ENCODE measurements at regions of chr1 and their contacts with region 1.

Region 1: DNA sequence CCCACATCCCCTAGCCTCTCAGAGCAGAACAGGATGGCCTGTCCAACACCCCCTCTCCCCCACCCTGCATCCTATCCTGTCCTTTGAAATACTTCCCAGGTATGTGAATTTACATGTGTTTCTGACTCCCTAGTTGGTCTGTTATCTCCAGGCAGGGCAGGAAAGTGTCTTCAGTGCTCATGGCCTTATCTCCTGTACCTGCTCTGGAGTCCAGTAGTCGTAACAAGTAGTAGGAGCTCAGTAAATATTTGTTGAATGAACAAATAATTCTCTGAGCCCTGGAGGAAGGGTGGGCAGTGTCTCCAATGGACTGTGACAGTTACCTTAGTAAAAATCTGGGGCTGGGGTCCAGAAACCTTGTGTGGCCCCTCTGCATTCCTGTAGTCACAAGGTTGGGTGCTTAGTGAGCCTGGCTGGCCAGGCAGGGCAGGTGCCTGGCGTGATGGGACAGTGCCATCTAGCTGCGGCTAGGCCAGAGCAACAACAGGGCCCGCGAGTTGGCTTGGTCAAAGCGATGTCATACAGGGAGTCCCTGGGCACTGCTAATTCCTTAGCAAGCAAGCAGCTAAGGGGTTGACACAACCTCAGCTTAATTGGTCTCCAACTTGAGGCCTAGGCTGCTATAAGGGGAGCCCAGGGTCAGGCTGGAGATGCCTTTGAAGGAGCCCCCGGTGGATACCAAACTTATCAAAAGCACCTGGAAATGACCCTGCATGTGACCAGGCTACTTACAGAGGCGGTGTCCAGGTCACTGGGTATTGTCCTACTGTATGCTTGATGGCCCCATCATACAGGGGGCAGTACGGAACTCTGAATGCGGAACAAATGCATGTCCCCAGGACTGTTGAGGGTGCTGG is 89.0 kb upstream of the PPM1J start:
- DNase-seq: peak; percentile 36 to 86 (median 72)
- ATAC-seq: peak; percentile 98
- H3K4me3 ChIP-seq: no peak overlapping the region
- H3K27ac ChIP-seq: no peak overlapping the region
- H3K4me1 ChIP-seq: no peaks in the 10 kb centered on the region
- H3K27me3 ChIP-seq: peaks cover 0 to 3% of the 10 kb centered on the region in 2 donors
- CTCF ChIP-seq: peak; percentile 53 to 68

Region 2: GRCh38 chr1:112715264-112716053 is 88.7 kb before region 1 on chr1 and contains the start of gene PPM1J:
- intact Hi-C with region 1: loop called (anchors 5 to 10 kb)
- DNase-seq: peak; percentile 75 to 100 (median 94)
- ATAC-seq: peak; percentile 91
- H3K4me3 ChIP-seq: peak within 1 kb of the TSS; percentile 56 to 67
- H3K27ac ChIP-seq: peak within 1 kb of the TSS in 1 of 2 donors; percentile 58
- H3K4me1 ChIP-seq: peaks cover 13 to 37% of the 10 kb centered on the region in 2 donors
- H3K27me3 ChIP-seq: peaks cover 0 to 38% of the 10 kb centered on the region in 2 donors
- CTCF ChIP-seq: no peak
- polyA plus RNA-seq, gene PPM1J: 0.47 to 0.72 (median 0.62) TPM

Region 3: DNA sequence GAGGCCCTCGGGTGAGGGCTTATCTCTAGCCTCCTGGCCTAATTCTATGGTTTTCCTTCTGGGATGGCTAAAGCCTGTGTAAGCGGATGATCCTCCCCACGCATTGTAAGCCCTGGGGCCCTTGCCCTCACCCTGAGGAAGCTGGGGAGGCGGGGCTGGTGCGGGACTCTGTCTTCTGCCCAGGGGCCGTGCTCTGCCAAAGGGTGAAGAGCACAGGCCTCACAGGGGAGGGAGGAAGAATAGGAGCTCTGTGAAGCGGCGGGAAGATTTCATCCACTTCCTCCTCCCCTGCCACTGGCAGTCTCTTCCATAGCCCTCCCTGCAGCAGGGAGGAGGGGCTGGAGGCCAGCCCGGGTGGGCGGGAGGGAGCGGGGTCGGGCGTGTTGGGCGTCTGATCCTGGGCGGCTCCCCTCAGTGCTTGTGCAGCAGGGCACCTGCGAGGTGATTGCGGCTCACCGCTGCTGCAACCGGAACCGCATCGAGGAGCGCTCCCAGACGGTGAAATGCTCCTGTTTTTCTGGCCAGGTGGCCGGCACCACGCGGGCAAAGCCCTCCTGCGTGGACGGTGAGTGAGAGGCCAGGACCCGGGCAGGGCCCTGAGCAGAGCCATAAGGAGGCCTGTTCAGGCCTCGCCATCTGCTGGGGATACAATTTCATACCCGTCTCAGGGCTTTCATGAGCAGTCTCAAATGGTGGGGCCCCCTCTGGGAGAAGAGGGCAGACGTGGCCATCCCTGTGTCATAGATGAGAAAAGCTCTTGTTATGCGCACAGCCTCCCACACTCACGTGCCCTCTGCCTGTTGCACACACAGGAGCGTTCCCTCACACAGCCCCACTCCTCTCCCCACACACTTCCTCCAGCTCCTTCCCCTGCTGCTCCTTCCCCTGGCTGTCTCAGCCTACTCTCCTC is 81.3 kb before region 1 on chr1:
- intact Hi-C with region 1: loop called (anchors 5 to 10 kb)
- DNase-seq: peak in 1 of 4 donors; percentile 52
- ATAC-seq: peak; percentile 39
- H3K4me3 ChIP-seq: no peak overlapping the region
- H3K27ac ChIP-seq: no peak overlapping the region
- H3K4me1 ChIP-seq: peaks cover 6 to 18% of the 10 kb centered on the region in 2 donors
- H3K27me3 ChIP-seq: peaks cover 0 to 45% of the 10 kb centered on the region in 2 donors
- CTCF ChIP-seq: no peak

Region 4: DNA sequence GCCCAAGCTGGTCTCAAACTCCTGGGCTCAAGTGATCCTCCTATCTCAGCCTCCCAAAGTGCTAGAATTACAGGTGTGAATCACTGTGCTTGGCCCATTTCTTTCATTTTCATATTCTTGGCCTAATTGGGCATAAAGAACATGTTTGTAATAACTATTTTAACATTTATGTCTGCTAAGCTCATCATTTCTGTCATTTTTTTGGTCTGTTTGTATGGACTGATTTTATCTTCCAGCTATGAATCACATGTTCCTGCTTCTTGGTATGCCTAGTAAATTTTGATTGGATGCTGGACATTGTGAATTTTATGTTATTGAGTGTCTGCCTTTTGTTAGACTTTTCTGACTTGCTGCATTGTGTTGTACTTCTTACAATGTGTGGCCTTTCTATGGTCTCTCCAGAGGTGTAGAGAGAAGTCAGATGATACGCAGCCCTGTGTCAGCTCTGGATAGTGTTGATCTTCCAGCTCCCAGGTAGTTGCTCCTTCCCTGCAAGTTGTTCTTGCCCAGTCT is 50.0 kb before region 1 on chr1:
- intact Hi-C with region 1: no loop called
- DNase-seq: no peak
- ATAC-seq: no peak
- H3K4me3 ChIP-seq: no peak overlapping the region
- H3K27ac ChIP-seq: no peak overlapping the region
- H3K4me1 ChIP-seq: no peaks in the 10 kb centered on the region
- H3K27me3 ChIP-seq: peaks cover 0 to 20% of the 10 kb centered on the region in 2 donors
- CTCF ChIP-seq: no peak

Region 5: GRCh38 chr1:113007706-113008364 is 203.7 kb after region 1 on chr1:
- intact Hi-C with region 1: no loop called
- DNase-seq: no peak
- ATAC-seq: no peak
- H3K4me3 ChIP-seq: no peak overlapping the region
- H3K27ac ChIP-seq: no peak overlapping the region
- H3K4me1 ChIP-seq: no peaks in the 10 kb centered on the region
- H3K27me3 ChIP-seq: no peaks in the 10 kb centered on the region
- CTCF ChIP-seq: no peak

Measured in left lung (tissue), 14 donors.